HEK293T (cell line): ENCODE measurements at regions of chr1 and their contacts with region 1.

Region 1: GRCh38 chr1:23559136-23559984 is at the start of gene ID3:
- DNase-seq: peak; percentile 70

Region 2: GRCh38 chr1:23577056-23578004 is 18.0 kb after region 1 on chr1:
- CTCF ChIA-PET with region 1: no interaction called
- POLR2A ChIA-PET with region 1: interaction called, 17 read pairs
- DNase-seq: no peak

Region 3: DNA sequence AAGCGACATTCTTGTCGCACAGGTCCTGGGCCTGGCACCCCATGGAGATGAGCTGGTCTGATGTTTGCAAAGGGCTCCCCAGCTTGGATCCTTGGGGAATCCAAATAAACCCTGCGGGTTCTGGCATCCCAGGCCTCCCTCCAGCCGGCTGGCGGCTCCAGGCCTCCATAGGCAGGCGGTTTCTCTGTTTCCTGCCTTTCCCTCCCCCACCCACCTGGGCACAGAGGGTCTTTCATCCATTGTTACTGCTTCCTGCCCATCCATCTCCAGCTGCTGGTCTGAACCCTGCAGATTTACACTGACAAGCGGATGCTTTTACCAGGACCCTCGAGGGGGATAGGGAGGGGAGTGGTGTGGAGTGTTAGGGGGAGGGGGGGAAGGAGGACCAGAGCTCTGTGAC is 39.1 kb after region 1 on chr1:
- CTCF ChIA-PET with region 1: no interaction called
- POLR2A ChIA-PET with region 1: interaction called, 14 read pairs
- DNase-seq: no peak

Region 4: DNA sequence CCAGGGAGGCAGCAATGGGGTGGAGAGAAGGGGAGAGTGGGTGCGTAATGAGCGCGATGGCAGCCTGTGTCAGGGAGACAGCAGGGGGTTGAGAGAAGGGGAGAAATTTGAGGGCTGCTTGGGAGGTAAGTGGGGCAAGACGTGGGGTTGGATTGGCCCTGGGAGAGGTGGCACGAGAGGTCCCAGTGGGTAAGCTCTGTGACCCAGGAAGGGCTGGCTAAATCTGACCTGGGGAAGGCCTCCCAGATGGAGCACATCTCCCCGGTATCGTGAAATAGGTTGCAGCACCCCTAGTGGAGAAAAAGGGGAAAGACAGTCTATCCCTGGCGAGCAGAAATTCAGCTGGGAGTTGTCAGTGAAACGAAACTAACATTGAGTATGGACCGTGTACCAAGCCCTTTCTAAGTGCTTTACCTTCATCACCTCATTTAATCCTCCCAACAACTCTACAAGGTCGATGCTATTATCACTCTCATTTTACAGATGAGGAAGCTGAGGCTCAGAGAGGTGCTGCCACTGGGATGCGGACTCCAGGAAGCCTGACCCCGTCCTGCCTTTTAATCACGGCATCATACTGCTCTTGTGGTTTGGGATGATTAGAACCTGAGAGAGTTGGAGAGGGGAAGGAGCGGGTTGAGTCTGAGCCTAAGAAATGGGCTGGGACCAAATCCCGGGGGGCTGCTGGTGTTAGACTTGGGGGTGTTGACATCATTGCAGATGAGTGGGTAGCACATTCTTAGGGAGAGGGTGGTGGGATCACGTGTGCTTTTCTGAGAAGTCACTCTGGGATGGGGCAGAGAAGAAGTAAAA is 75.7 kb after region 1 on chr1:
- CTCF ChIA-PET with region 1: interaction called, 31 read pairs
- POLR2A ChIA-PET with region 1: interaction called, 35 read pairs
- DNase-seq: peak; percentile 82